Aorta (tissue), 5 donors: ENCODE measurements at regions of chr9 and their contacts with region 1.

Region 1: GRCh38 chr9:92790542-92791527 is 26.2 kb upstream of the BICD2 start:
- DNase-seq: peak; percentile 78 to 88
- ATAC-seq: peak; percentile 91
- H3K4me3 ChIP-seq: no peak overlapping the region
- H3K27ac ChIP-seq: no peak overlapping the region
- H3K4me1 ChIP-seq: no peaks in the 10 kb centered on the region
- H3K27me3 ChIP-seq: peaks cover 0 to 2% of the 10 kb centered on the region in 2 donors

Region 2: DNA sequence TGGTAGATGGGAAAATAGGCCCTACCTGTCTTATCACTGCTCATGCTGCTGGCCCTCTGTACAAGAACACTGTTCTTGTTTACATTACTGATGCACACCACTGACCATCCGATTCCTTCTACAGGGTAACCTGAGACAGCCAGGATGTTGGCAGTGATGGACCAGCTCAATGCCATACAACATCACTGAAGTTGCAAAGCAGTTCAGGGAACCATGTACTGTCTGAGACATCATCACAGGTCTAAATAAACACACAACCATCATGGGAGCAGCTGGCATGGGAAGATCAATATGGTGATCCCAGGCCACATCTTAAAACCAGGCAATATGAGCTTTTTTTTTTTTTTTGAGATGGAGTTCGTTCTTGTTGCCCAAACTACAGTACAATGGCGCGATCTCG is 556.3 kb before region 1 on chr9:
- intact Hi-C with region 1: no loop called
- DNase-seq: no peak
- ATAC-seq: no peak
- H3K4me3 ChIP-seq: no peak overlapping the region
- H3K27ac ChIP-seq: no peak overlapping the region
- H3K4me1 ChIP-seq: no peaks in the 10 kb centered on the region
- H3K27me3 ChIP-seq: no peaks in the 10 kb centered on the region

Region 3: GRCh38 chr9:92716557-92716956 is 74.3 kb before region 1 on chr9:
- intact Hi-C with region 1: loop called (anchors 1 to 2 kb)
- DNase-seq: peak in 1 of 2 donors; percentile 92
- ATAC-seq: peak; percentile 77
- H3K4me3 ChIP-seq: no peak overlapping the region
- H3K27ac ChIP-seq: no peak overlapping the region
- H3K4me1 ChIP-seq: no peaks in the 10 kb centered on the region
- H3K27me3 ChIP-seq: no peaks in the 10 kb centered on the region

Region 4: DNA sequence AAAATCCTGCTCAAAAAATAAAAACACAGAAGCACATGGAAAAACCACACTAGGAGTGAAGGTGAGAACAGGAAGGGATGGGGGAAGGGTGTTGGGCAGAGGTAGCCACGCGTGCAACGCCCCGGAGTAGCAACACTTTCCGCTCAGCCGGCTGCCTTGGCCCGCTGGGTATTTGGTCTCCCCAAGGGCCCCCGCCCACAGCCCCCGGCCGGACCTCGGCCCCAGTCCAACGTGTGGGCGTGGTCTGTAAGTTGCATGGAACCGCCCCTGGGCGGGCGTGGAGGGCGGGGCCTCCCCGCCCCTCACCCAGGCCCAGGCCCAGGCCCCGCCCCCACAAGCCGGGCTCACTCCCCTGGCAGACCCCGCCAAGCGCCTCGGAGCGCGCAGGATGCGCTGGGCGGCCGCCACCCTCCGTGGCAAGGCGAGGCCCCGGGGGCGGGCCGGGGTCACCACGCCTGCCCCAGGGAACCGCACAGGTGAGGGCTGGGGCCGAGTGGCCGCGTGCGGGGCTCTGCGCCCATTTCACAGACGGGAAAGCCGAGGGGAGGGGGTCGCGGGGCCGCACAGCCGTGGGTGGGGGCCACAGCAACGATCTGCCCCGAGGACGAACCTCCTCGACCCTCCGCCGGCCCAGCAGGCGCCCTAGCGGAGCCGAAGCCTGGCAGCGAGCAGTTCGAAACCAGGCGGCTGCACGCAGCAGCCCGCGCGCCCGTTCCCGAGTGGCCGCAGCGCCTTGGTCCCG is 267.7 kb after region 1 on chr9 and contains the start of gene SUSD3:
- intact Hi-C with region 1: no loop called
- DNase-seq: peak; percentile 80 to 92
- ATAC-seq: peak; percentile 78
- H3K4me3 ChIP-seq: peak within 1 kb of the TSS; percentile 45 to 51
- H3K27ac ChIP-seq: peak within 1 kb of the TSS in 1 of 2 donors; percentile 46
- H3K4me1 ChIP-seq: no peaks in the 10 kb centered on the region
- H3K27me3 ChIP-seq: no peaks in the 10 kb centered on the region
- total RNA-seq, gene SUSD3: 3.8 to 10.3 TPM